ENCODE measurements at regions of chr5 and their contacts with region 1.

Region 1: DNA sequence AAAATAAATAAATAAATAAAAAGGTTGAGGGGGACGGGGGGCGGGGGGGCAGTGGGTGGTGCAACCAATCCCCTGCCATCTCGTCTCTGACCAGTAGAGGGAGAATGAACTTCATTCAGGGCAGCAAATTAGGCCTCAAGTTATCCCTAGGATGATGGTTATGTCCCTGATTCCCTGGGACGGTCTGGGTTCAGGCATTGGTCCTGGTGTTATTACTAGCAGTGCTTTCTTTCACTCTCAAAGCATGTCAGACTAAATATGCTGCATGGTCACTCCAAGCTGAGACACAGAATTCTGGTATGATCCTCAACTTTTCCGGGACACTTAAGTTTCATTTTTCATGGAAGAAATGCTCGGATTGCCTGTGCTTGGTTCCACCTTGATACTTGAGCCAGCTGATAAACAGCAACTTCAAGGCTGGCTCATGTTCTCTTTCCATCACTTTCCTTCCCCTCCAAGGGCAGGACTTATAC is 59.4 kb downstream of the DAP start:
- DNase-seq: peak; percentile 71
- ATAC-seq: peak; percentile 57
- H3K4me3 ChIP-seq: no peak overlapping the region
- H3K27ac ChIP-seq: peak overlapping the region; percentile 44
- H3K4me1 ChIP-seq: peaks cover 28% of the 10 kb centered on the region
- H3K27me3 ChIP-seq: no peaks in the 10 kb centered on the region
- CTCF ChIP-seq: peak; percentile 50
- POLR2A ChIP-seq: no peak
- RAD21 ChIP-seq: peak; percentile 64

Region 2: DNA sequence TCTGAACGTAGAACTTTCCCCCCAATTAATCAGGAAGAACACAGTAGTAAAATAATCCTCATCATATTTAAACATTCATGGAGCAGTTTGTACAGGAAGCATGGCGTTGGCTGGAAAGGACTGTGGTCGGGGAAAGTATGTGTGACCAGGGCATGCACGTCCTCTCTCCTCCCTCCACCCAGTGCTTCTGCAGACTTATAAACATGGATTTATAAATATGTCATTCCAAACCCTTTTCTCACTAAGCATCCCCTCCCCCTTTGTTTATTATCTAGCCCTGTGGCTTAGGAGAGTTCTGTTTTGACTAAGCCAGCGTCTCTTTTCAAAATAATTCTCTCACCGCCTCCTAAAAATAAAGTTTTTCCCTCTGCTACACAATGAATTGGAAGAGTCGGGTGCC is 129.8 kb after region 1 on chr5:
- CTCF ChIA-PET with region 1: no interaction called
- POLR2A ChIA-PET with region 1: no interaction called
- dilution Hi-C with region 1: no loop called
- in situ Hi-C with region 1: loop called (anchors 10 kb)
- intact Hi-C with region 1: no loop called
- DNase-seq: peak; percentile 95
- ATAC-seq: peak; percentile 96
- H3K4me3 ChIP-seq: no peak overlapping the region
- H3K27ac ChIP-seq: peak overlapping the region; percentile 94
- H3K4me1 ChIP-seq: peaks cover 23% of the 10 kb centered on the region
- H3K27me3 ChIP-seq: no peaks in the 10 kb centered on the region
- CTCF ChIP-seq: no peak
- POLR2A ChIP-seq: peak; percentile 14; the same call in 1 of the 2 replicates
- RAD21 ChIP-seq: 0 out of 2 replicates have a peak, but pooled peaks have one; percentile 11

Region 3: GRCh38 chr5:10856683-10857337 is 155.2 kb after region 1 on chr5:
- CTCF ChIA-PET with region 1: interaction called, 4 read pairs
- POLR2A ChIA-PET with region 1: no interaction called
- dilution Hi-C with region 1: no loop called
- in situ Hi-C with region 1: no loop called
- intact Hi-C with region 1: loop called (anchors 1 kb)
- DNase-seq: peak; percentile 77
- ATAC-seq: peak; percentile 90
- H3K4me3 ChIP-seq: no peak overlapping the region
- H3K27ac ChIP-seq: peak overlapping the region; percentile 1; the same call in 1 of the 2 replicates
- H3K4me1 ChIP-seq: peaks cover 18% of the 10 kb centered on the region
- H3K27me3 ChIP-seq: no peaks in the 10 kb centered on the region
- CTCF ChIP-seq: peak; percentile 85
- POLR2A ChIP-seq: no peak
- RAD21 ChIP-seq: peak; percentile 65

Region 4: GRCh38 chr5:10902145-10902544 is 200.5 kb after region 1 on chr5:
- CTCF ChIA-PET with region 1: no interaction called
- POLR2A ChIA-PET with region 1: no interaction called
- dilution Hi-C with region 1: no loop called
- in situ Hi-C with region 1: no loop called
- intact Hi-C with region 1: loop called (anchors 5 kb)
- DNase-seq: peak; percentile 87
- ATAC-seq: peak; percentile 88
- H3K4me3 ChIP-seq: no peak overlapping the region
- H3K27ac ChIP-seq: peak overlapping the region; percentile 43
- H3K4me1 ChIP-seq: peaks cover 11% of the 10 kb centered on the region
- H3K27me3 ChIP-seq: no peaks in the 10 kb centered on the region; the same call in 1 of the 2 replicates
- CTCF ChIP-seq: no peak
- POLR2A ChIP-seq: no peak
- RAD21 ChIP-seq: no peak